PC-3 (cell line): ENCODE measurements at regions of chr6 and their contacts with region 1.

Region 1: DNA sequence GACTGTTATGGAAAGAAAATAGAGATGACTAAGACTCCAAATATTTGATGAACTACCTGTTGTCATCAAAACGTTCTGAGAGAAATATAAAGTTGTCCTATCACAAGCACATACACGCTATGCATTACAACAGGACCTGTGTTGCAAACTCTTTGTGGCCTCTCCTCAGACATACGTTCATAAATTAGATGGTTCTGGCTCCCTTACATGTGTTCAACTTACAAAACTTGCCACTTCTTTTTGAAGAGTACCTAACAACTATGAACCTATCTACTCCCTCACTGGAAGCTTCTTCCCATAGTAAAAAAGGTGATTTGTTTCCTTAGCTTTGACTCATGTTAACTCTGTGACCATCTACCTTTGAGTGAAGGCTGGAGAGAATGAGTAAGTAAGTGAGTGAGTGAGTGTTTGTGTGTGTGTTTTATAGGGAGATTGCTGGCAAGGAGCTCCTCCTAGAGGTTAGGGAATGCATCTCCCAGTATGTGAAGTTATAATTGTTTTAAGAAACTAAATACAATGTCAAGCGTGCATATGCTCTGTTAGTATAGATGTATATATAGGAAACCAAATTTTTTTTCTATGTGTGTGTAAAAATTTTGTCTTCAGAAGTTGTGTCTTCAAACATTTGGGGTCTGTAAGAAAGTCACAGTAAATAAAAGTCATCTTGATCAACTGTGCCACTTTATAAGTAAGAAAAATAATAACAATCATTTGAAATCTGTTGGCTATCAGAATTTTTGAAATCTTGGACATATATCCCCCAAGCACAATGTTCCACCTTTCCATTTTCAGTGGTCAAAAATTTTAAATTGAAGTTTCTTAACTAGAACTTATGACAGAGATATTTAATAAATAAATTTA is 1211.1 kb upstream of the GJE1 start:
- DNase-seq: peak; percentile 89
- ATAC-seq: peak; percentile 99
- H3K4me3 ChIP-seq: no peak overlapping the region
- H3K27ac ChIP-seq: peak overlapping the region; percentile 75
- H3K4me1 ChIP-seq: peaks cover 8% of the 10 kb centered on the region
- H3K27me3 ChIP-seq: no peaks in the 10 kb centered on the region
- CTCF ChIP-seq: peak; percentile 85

Region 2: GRCh38 chr6:139369568-139370282 is 1551.9 kb before region 1 on chr6:
- CTCF ChIA-PET with region 1: no interaction called
- POLR2A ChIA-PET with region 1: interaction called, 4 read pairs
- intact Hi-C with region 1: loop called (anchors 2 kb)
- DNase-seq: peak; percentile 59
- ATAC-seq: no peak
- H3K4me3 ChIP-seq: no peak overlapping the region
- H3K27ac ChIP-seq: no peak overlapping the region
- H3K4me1 ChIP-seq: peaks cover 23% of the 10 kb centered on the region
- H3K27me3 ChIP-seq: no peaks in the 10 kb centered on the region
- CTCF ChIP-seq: peak; percentile 78

Region 3: DNA sequence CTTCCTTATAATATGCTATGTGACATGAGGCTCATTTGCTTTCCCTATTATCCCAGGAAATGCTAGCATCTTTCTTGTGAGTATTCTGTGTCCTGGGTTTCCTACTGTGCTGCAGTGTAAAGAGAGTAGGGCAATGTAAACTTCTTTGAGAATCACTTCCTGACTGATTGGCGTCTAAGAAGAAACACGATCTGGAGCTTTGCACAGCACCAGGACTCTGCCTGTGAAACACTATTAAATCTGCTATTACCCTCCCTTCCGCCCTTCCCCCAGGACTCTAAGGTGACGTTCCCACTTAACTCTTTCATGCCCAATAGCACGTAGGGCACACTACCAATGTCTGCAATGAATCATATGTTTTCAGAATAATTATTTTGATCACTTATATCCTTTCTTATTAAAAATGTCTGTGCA is 939.8 kb before region 1 on chr6:
- CTCF ChIA-PET with region 1: no interaction called
- POLR2A ChIA-PET with region 1: no interaction called
- intact Hi-C with region 1: loop called (anchors 1 kb)
- DNase-seq: peak; percentile 74
- ATAC-seq: peak; percentile 84
- H3K4me3 ChIP-seq: peak overlapping the region; percentile 33; the same call in 1 of the 2 replicates
- H3K27ac ChIP-seq: peak overlapping the region; percentile 75
- H3K4me1 ChIP-seq: peaks cover 53% of the 10 kb centered on the region
- H3K27me3 ChIP-seq: no peaks in the 10 kb centered on the region
- CTCF ChIP-seq: no peak

Region 4: GRCh38 chr6:140537819-140538705 is 383.5 kb before region 1 on chr6:
- CTCF ChIA-PET with region 1: no interaction called
- POLR2A ChIA-PET with region 1: no interaction called
- intact Hi-C with region 1: loop called (anchors 1 kb)
- DNase-seq: peak; percentile 77
- ATAC-seq: peak; percentile 100
- H3K4me3 ChIP-seq: peak overlapping the region; percentile 49
- H3K27ac ChIP-seq: peak overlapping the region; percentile 68
- H3K4me1 ChIP-seq: peaks cover 23% of the 10 kb centered on the region
- H3K27me3 ChIP-seq: no peaks in the 10 kb centered on the region
- CTCF ChIP-seq: no peak

Region 5: GRCh38 chr6:140960566-140960965 is 39.0 kb after region 1 on chr6:
- CTCF ChIA-PET with region 1: no interaction called
- POLR2A ChIA-PET with region 1: no interaction called
- intact Hi-C with region 1: no loop called
- DNase-seq: no peak
- ATAC-seq: no peak
- H3K4me3 ChIP-seq: no peak overlapping the region
- H3K27ac ChIP-seq: no peak overlapping the region
- H3K4me1 ChIP-seq: no peaks in the 10 kb centered on the region
- H3K27me3 ChIP-seq: no peaks in the 10 kb centered on the region
- CTCF ChIP-seq: no peak

Region 6: DNA sequence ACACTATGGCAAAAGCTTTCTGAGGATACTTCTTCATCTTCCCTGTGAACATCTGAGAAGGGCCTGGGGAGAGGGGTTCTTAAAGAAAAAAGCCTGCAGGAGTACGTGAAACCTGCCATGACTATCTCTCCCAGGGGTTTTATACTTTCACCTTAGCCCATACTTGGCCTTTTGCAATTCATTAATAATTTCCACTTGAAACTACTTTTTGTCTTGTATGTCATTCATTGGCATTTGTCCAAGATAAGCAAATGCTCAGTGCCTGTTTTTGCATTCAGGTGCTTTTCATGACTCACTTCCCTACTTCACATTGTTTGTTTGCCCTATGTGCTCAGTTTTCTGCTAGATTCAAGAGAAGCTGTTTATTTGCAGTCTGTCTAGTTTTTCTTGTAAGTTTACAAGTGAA is 630.9 kb after region 1 on chr6:
- CTCF ChIA-PET with region 1: no interaction called
- POLR2A ChIA-PET with region 1: no interaction called
- intact Hi-C with region 1: loop called (anchors 2 kb)
- DNase-seq: peak; percentile 93
- ATAC-seq: peak; percentile 93
- H3K4me3 ChIP-seq: peak overlapping the region; percentile 23; the same call in 1 of the 2 replicates
- H3K27ac ChIP-seq: peak overlapping the region; percentile 96
- H3K4me1 ChIP-seq: peaks cover 33% of the 10 kb centered on the region
- H3K27me3 ChIP-seq: no peaks in the 10 kb centered on the region
- CTCF ChIP-seq: no peak

Region 7: DNA sequence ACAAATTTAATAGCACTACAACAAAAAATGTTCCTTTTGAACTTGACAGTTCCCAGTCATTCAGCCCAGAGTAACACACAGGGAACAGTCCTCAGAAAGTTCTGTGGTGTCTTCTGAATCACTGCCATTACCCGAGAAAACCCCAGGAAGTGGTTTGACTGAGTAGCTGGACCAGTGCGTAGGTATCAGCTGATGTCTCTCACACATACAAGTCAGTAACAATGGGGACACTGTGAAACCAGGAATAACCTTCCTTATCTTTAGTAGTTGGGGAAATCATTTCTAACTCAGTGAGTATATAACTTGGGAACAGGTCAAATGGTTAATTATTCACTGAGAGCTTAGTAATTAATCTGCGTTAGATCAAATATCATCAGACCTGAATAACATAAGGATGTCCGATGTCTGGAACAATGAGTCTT is 1950.3 kb after region 1 on chr6:
- CTCF ChIA-PET with region 1: no interaction called
- POLR2A ChIA-PET with region 1: no interaction called
- intact Hi-C with region 1: no loop called
- DNase-seq: peak; percentile 68
- ATAC-seq: peak; percentile 86
- H3K4me3 ChIP-seq: no peak overlapping the region
- H3K27ac ChIP-seq: peak overlapping the region; percentile 78
- H3K4me1 ChIP-seq: peaks cover 20% of the 10 kb centered on the region
- H3K27me3 ChIP-seq: no peaks in the 10 kb centered on the region
- CTCF ChIP-seq: no peak